ENCODE measurements at regions of chr9 and their contacts with region 1.

Region 1: GRCh38 chr9:22682961-22683699 is 236.5 kb downstream of the DMRTA1 start:
- DNase-seq: peak; percentile 46 to 56
- ATAC-seq: peak; percentile 89 to 94
- H3K4me3 ChIP-seq: peak overlapping the region in 1 of 4 donors; percentile 13
- H3K27ac ChIP-seq: peak overlapping the region; percentile 72 to 91 (median 90)
- H3K4me1 ChIP-seq: peaks cover 23 to 27% of the 10 kb centered on the region in 2 donors
- H3K27me3 ChIP-seq: no peaks in the 10 kb centered on the region
- CTCF ChIP-seq: no peak
- POLR2A ChIP-seq: no peak

Region 2: GRCh38 chr9:22617156-22617555 is 66.0 kb before region 1 on chr9:
- in situ Hi-C with region 1: no loop called
- intact Hi-C with region 1: loop called (anchors 5 kb)
- DNase-seq: peak in 1 of 2 donors; percentile 11
- ATAC-seq: peak; percentile 93 to 94
- H3K4me3 ChIP-seq: no peak overlapping the region
- H3K27ac ChIP-seq: peak overlapping the region; percentile 46 to 56 (median 50)
- H3K4me1 ChIP-seq: peaks cover 12 to 13% of the 10 kb centered on the region in 2 donors
- H3K27me3 ChIP-seq: no peaks in the 10 kb centered on the region
- CTCF ChIP-seq: no peak
- POLR2A ChIP-seq: no peak

Region 3: GRCh38 chr9:22649384-22649783 is 33.7 kb before region 1 on chr9:
- in situ Hi-C with region 1: no loop called
- intact Hi-C with region 1: loop called (anchors 2 kb)
- DNase-seq: no peak
- ATAC-seq: peak; percentile 46 to 64
- H3K4me3 ChIP-seq: no peak overlapping the region
- H3K27ac ChIP-seq: peak overlapping the region in 3 of 4 donors; percentile 32 to 63 (median 47)
- H3K4me1 ChIP-seq: peaks cover 14 to 26% of the 10 kb centered on the region in 2 donors
- H3K27me3 ChIP-seq: no peaks in the 10 kb centered on the region
- CTCF ChIP-seq: no peak
- POLR2A ChIP-seq: no peak

Measured in gastrocnemius medialis (tissue), 4 donors.